ENCODE measurements at regions of chr7 and their contacts with region 1.

Region 1: GRCh38 chr7:29105752-29106668 is 40.3 kb downstream of the CPVL start:
- DNase-seq: peak in 1 of 3 donors; percentile 21
- ATAC-seq: peak; percentile 76 to 78
- H3K4me3 ChIP-seq: no peak overlapping the region
- H3K27ac ChIP-seq: no peak overlapping the region
- H3K4me1 ChIP-seq: no peaks in the 10 kb centered on the region
- H3K27me3 ChIP-seq: no peaks in the 10 kb centered on the region

Region 2: GRCh38 chr7:28921822-28922221 is 184.2 kb before region 1 on chr7:
- intact Hi-C with region 1: loop called (anchors 2 kb)
- DNase-seq: no peak
- ATAC-seq: peak; percentile 89 to 92
- H3K4me3 ChIP-seq: no peak overlapping the region
- H3K27ac ChIP-seq: no peak overlapping the region
- H3K4me1 ChIP-seq: no peaks in the 10 kb centered on the region
- H3K27me3 ChIP-seq: no peaks in the 10 kb centered on the region

Region 3: GRCh38 chr7:28926871-28927597 is 179.0 kb before region 1 on chr7:
- intact Hi-C with region 1: loop called (anchors 2 kb)
- DNase-seq: peak; percentile 80 to 88 (median 83)
- ATAC-seq: peak; percentile 92 to 97
- H3K4me3 ChIP-seq: peak overlapping the region; percentile 66
- H3K27ac ChIP-seq: no peak overlapping the region
- H3K4me1 ChIP-seq: no peaks in the 10 kb centered on the region
- H3K27me3 ChIP-seq: no peaks in the 10 kb centered on the region

Measured in right cardiac atrium (tissue), 5 donors.